ENCODE measurements at regions of chr16 and their contacts with region 1.

Region 1: GRCh38 chr16:67841764-67842508 is at the start of gene THAP11:
- DNase-seq: peak; percentile 91 to 97 (median 94)
- ATAC-seq: peak; percentile 62
- H3K4me3 ChIP-seq: peak within 1 kb of the TSS; percentile 97 to 100
- H3K4me3 Mint-ChIP-seq: peak within 1 kb of the TSS; percentile 95
- H3K27ac ChIP-seq: peak within 1 kb of the TSS; percentile 53 to 99
- H3K27ac Mint-ChIP-seq: peak within 1 kb of the TSS; percentile 96
- H3K4me1 ChIP-seq: peaks cover 39% of the 10 kb centered on the region
- H3K4me1 Mint-ChIP-seq: peaks cover 41% of the 10 kb centered on the region
- H3K27me3 ChIP-seq: no peaks in the 10 kb centered on the region
- H3K27me3 Mint-ChIP-seq: no peaks in the 10 kb centered on the region
- CTCF ChIP-seq: peak; percentile 79
- total RNA-seq, gene THAP11: 25.1 to 26.0 TPM

Region 2: DNA sequence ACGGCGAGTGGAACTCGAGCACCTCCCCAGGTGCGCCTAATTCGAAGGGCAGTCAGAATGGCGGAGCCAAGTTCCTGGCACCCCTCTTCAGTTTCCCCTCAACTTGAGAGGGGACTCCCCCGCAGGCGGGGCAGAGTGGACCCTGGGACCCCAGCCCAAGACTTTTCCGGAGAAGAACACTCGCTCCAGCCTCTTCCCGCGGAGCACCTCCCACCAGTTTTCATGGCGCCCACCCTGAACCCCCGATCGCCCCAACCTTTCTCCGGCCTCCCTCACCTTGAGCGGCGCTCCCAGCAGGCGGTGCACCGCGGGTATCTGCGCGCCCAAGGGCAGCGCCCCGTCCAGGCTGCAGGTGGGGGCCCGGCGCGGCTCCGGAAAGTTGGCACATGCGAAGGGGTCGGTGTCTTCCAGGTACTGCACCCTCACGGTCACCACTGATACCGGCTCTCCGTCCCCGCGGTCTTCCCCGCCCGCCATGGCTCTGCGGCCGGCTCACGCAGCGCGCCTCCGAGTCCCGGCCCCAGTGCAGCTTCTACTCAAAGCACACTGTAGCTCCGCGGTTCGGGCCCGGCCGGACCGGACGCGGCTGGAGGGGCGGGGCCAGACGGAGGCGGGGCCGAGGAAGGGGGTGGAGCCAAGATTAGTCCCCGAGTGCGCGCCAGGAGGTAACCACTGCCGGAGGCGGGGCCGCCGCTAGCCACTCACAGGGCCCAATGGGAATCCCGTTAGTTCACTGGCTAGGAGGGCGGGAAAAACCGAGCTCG is 594.8 kb before region 1 on chr16 and contains the start of gene FHOD1:
- CTCF ChIA-PET with region 1: no interaction called
- POLR2A ChIA-PET with region 1: no interaction called
- intact Hi-C with region 1: loop called in 1 of 2 experiments (anchors 10 kb)
- DNase-seq: peak; percentile 86 to 98 (median 96)
- ATAC-seq: peak; percentile 70
- H3K4me3 ChIP-seq: peak within 1 kb of the TSS; percentile 81 to 92
- H3K4me3 Mint-ChIP-seq: peak within 1 kb of the TSS; percentile 88
- H3K27ac ChIP-seq: peak within 1 kb of the TSS; percentile 44 to 86
- H3K27ac Mint-ChIP-seq: peak within 1 kb of the TSS; percentile 82
- H3K4me1 ChIP-seq: peaks cover 47% of the 10 kb centered on the region
- H3K4me1 Mint-ChIP-seq: peaks cover 51% of the 10 kb centered on the region
- H3K27me3 ChIP-seq: peaks cover 0 to 3% of the 10 kb centered on the region in 2 experiments
- H3K27me3 Mint-ChIP-seq: peaks cover 3% of the 10 kb centered on the region
- CTCF ChIP-seq: no peak
- total RNA-seq, gene FHOD1: 15.2 to 18.7 TPM

Region 3: GRCh38 chr16:67428146-67428731 is 413.7 kb before region 1 on chr16:
- CTCF ChIA-PET with region 1: no interaction called
- POLR2A ChIA-PET with region 1: no interaction called
- intact Hi-C with region 1: no loop called
- DNase-seq: peak in 8 of 9 experiments; percentile 25 to 64 (median 56)
- ATAC-seq: peak; percentile 71
- H3K4me3 ChIP-seq: no peak overlapping the region
- H3K4me3 Mint-ChIP-seq: no peak overlapping the region
- H3K27ac ChIP-seq: no peak overlapping the region
- H3K27ac Mint-ChIP-seq: no peak overlapping the region
- H3K4me1 ChIP-seq: peaks cover 7% of the 10 kb centered on the region
- H3K4me1 Mint-ChIP-seq: peaks cover 11% of the 10 kb centered on the region
- H3K27me3 ChIP-seq: peaks cover 12 to 19% of the 10 kb centered on the region in 2 experiments
- H3K27me3 Mint-ChIP-seq: peaks cover 51% of the 10 kb centered on the region
- CTCF ChIP-seq: peak; percentile 51

Region 4: GRCh38 chr16:67667817-67668494 is 174.0 kb before region 1 on chr16:
- CTCF ChIA-PET with region 1: interaction called, 3 read pairs
- POLR2A ChIA-PET with region 1: no interaction called
- intact Hi-C with region 1: loop called in 1 of 2 experiments (anchors 10 kb)
- DNase-seq: peak; percentile 64 to 91 (median 78)
- ATAC-seq: peak; percentile 90
- H3K4me3 ChIP-seq: peak overlapping the region in 1 of 2 experiments; percentile 84
- H3K4me3 Mint-ChIP-seq: peak overlapping the region; percentile 82
- H3K27ac ChIP-seq: peak overlapping the region in 1 of 2 experiments; percentile 38
- H3K27ac Mint-ChIP-seq: no peak overlapping the region
- H3K4me1 ChIP-seq: peaks cover 17% of the 10 kb centered on the region
- H3K4me1 Mint-ChIP-seq: peaks cover 16% of the 10 kb centered on the region
- H3K27me3 ChIP-seq: no peaks in the 10 kb centered on the region
- H3K27me3 Mint-ChIP-seq: no peaks in the 10 kb centered on the region
- CTCF ChIP-seq: peak; percentile 65

Region 5: DNA sequence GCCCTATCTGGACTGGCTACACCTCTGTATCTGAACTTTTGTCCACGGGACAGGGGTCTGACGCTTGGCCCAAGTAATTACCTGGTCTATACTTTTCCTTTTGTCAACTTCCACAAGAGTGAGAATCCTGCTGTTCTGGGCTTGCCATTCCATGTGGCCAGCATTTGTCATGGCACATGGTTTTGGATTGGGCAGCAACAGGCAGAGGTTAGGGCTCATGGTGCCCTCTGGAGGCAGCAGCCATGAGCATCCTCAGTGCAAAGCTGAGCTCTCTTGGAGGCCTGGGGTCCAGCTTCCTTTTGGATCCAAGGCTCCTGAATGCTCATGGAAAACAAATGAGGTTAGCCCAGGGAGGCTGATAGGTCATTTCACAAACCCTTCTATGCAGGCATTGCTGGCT is 23.4 kb after region 1 on chr16:
- CTCF ChIA-PET with region 1: interaction called, 4 read pairs
- POLR2A ChIA-PET with region 1: interaction called, 3 read pairs
- intact Hi-C with region 1: loop called in 1 of 2 experiments (anchors 2 kb)
- DNase-seq: peak in 2 of 9 experiments; percentile 40 to 51
- ATAC-seq: peak; percentile 61
- H3K4me3 ChIP-seq: no peak overlapping the region
- H3K4me3 Mint-ChIP-seq: no peak overlapping the region
- H3K27ac ChIP-seq: no peak overlapping the region
- H3K27ac Mint-ChIP-seq: no peak overlapping the region
- H3K4me1 ChIP-seq: no peaks in the 10 kb centered on the region
- H3K4me1 Mint-ChIP-seq: peaks cover 7% of the 10 kb centered on the region
- H3K27me3 ChIP-seq: no peaks in the 10 kb centered on the region
- H3K27me3 Mint-ChIP-seq: no peaks in the 10 kb centered on the region
- CTCF ChIP-seq: no peak

Region 6: GRCh38 chr16:67968400-67969253 is 126.7 kb after region 1 on chr16 and contains the start of gene SLC12A4:
- CTCF ChIA-PET with region 1: no interaction called
- POLR2A ChIA-PET with region 1: no interaction called
- intact Hi-C with region 1: loop called in 1 of 2 experiments (anchors 10 kb)
- DNase-seq: peak; percentile 66 to 93 (median 86)
- ATAC-seq: peak; percentile 90
- H3K4me3 ChIP-seq: peak within 1 kb of the TSS; percentile 78 to 97
- H3K4me3 Mint-ChIP-seq: peak within 1 kb of the TSS; percentile 83
- H3K27ac ChIP-seq: peak within 1 kb of the TSS; percentile 44 to 59
- H3K27ac Mint-ChIP-seq: peak within 1 kb of the TSS; percentile 94
- H3K4me1 ChIP-seq: peaks cover 15% of the 10 kb centered on the region
- H3K4me1 Mint-ChIP-seq: peaks cover 21% of the 10 kb centered on the region
- H3K27me3 ChIP-seq: no peaks in the 10 kb centered on the region
- H3K27me3 Mint-ChIP-seq: no peaks in the 10 kb centered on the region
- CTCF ChIP-seq: no peak
- total RNA-seq, gene SLC12A4: 20.1 to 20.7 TPM

Region 7: DNA sequence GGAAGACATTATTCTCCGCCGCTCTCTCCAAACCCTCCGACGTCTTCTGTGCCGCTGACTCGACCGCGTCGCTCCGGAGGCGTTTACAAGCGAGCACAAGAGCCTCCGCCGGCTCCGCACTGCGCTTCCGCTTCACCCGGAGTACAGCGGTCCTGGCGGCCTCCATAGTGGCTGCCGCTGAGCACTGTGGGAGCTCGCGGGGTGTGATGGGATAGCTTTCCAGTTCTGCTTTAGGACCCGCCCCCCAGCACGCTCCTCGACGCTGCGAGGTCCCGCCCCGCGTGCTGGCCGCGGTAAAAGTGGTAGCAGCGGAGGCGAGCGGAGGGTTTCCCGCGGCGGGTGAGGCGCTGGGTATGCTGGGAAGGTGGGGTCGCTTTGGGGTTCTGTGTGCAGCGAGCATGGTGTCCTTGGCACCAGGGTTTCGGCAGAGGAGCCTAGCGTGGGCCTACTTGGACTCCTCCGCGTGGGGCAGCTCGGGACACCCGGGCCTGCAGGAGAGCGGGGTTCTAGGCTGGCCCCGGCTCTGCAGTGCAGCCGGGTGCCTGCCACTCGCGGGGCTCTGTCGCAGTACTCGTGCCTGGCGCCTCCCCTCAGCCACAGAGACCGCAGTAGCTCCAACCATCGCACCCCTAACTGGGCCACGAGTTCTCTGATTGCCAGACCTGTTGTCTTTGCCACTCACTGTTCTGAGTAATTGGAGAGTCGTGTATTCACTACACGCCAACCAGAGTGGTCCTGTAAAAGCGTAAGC is 469.0 kb after region 1 on chr16 and contains the starts of genes PRMT7 and SLC7A6OS:
- CTCF ChIA-PET with region 1: no interaction called
- POLR2A ChIA-PET with region 1: no interaction called
- intact Hi-C with region 1: loop called in 1 of 2 experiments (anchors 1 kb)
- DNase-seq: peak; percentile 77 to 96 (median 92)
- ATAC-seq: peak; percentile 97
- H3K4me3 ChIP-seq: peak within 1 kb of the TSS; percentile 84 to 92
- H3K4me3 Mint-ChIP-seq: peak within 1 kb of the TSS; percentile 97
- H3K27ac ChIP-seq: peak within 1 kb of the TSS; percentile 70 to 81
- H3K27ac Mint-ChIP-seq: peak within 1 kb of the TSS; percentile 98
- H3K4me1 ChIP-seq: peaks cover 46% of the 10 kb centered on the region
- H3K4me1 Mint-ChIP-seq: peaks cover 62% of the 10 kb centered on the region
- H3K27me3 ChIP-seq: no peaks in the 10 kb centered on the region
- H3K27me3 Mint-ChIP-seq: no peaks in the 10 kb centered on the region
- CTCF ChIP-seq: peak; percentile 8
- total RNA-seq, gene PRMT7: 53.8 to 58.7 TPM
- total RNA-seq, gene SLC7A6OS: 39.4 to 44.2 TPM